ENCODE measurements at regions of chr3 and their contacts with region 1.

Region 1: GRCh38 chr3:73056014-73056844 is 5.2 kb upstream of the EBLN2 start:
- DNase-seq: peak; percentile 41
- H3K4me3 Mint-ChIP-seq: no peak overlapping the region
- H3K27ac Mint-ChIP-seq: no peak overlapping the region
- H3K4me1 Mint-ChIP-seq: peaks cover 25% of the 10 kb centered on the region
- H3K27me3 Mint-ChIP-seq: no peaks in the 10 kb centered on the region
- CTCF ChIP-seq: peak; percentile 49

Region 2: GRCh38 chr3:72938471-72939265 is 117.6 kb before region 1 on chr3:
- CTCF ChIA-PET with region 1: interaction called, 50 read pairs
- POLR2A ChIA-PET with region 1: interaction called, 4 read pairs
- intact Hi-C with region 1: loop called (anchors 1 kb)
- DNase-seq: peak; percentile 76
- H3K4me3 Mint-ChIP-seq: peak overlapping the region; percentile 13
- H3K27ac Mint-ChIP-seq: no peak overlapping the region
- H3K4me1 Mint-ChIP-seq: peaks cover 12% of the 10 kb centered on the region
- H3K27me3 Mint-ChIP-seq: no peaks in the 10 kb centered on the region
- CTCF ChIP-seq: peak; percentile 71

Region 3: GRCh38 chr3:72944696-72945095 is 111.5 kb before region 1 on chr3:
- CTCF ChIA-PET with region 1: interaction called, 50 read pairs
- POLR2A ChIA-PET with region 1: no interaction called
- intact Hi-C with region 1: loop called (anchors 1 kb)
- DNase-seq: no peak
- H3K4me3 Mint-ChIP-seq: no peak overlapping the region
- H3K27ac Mint-ChIP-seq: no peak overlapping the region
- H3K4me1 Mint-ChIP-seq: peaks cover 8% of the 10 kb centered on the region
- H3K27me3 Mint-ChIP-seq: no peaks in the 10 kb centered on the region
- CTCF ChIP-seq: no peak

Region 4: DNA sequence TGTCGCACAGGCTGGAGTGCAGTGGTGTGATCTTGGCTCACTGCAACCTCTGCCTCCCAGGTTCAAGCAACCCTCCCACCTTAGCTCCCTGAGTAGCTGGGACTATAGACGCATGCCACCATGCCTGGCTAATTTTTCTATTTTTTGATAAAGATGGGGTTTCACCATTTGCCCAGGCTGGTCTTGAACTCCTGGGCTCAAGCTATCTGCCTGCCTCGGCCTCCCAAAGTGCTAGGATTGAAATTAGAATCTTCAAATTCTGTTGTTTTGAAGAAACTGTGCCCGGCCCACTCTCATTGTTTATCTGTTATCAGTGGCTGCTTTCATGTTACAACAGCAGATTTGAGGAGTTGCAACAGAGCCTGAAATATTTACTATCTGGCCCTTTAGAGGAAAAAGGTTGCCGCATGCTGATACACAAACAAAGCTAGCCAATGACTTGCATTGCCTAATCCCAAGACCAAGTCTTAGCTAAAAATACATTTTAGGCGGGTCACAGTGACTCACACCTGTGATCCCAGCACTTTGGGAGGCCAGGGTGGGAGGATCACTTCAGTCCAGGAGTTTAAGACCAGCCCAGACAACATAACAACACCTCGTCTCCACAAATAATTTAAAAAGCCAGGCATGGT is 102.8 kb before region 1 on chr3:
- CTCF ChIA-PET with region 1: interaction called, 10 read pairs
- POLR2A ChIA-PET with region 1: no interaction called
- intact Hi-C with region 1: no loop called
- DNase-seq: peak; percentile 78
- H3K4me3 Mint-ChIP-seq: no peak overlapping the region
- H3K27ac Mint-ChIP-seq: no peak overlapping the region
- H3K4me1 Mint-ChIP-seq: no peaks in the 10 kb centered on the region
- H3K27me3 Mint-ChIP-seq: no peaks in the 10 kb centered on the region
- CTCF ChIP-seq: no peak

Region 5: GRCh38 chr3:72996473-72997333 is 59.5 kb before region 1 on chr3 and contains the start of gene PPP4R2:
- CTCF ChIA-PET with region 1: interaction called, 17 read pairs
- POLR2A ChIA-PET with region 1: interaction called, 16 read pairs
- intact Hi-C with region 1: loop called (anchors 1 kb)
- DNase-seq: peak; percentile 87
- H3K4me3 Mint-ChIP-seq: peak within 1 kb of the TSS; percentile 86
- H3K27ac Mint-ChIP-seq: peak within 1 kb of the TSS; percentile 29
- H3K4me1 Mint-ChIP-seq: peaks cover 18% of the 10 kb centered on the region
- H3K27me3 Mint-ChIP-seq: no peaks in the 10 kb centered on the region
- CTCF ChIP-seq: no peak
- total RNA-seq, gene PPP4R2: 86.3 and 105 TPM in 2 replicates

Region 6: GRCh38 chr3:73045391-73045790 is 10.8 kb before region 1 on chr3:
- CTCF ChIA-PET with region 1: interaction called, 9 read pairs
- POLR2A ChIA-PET with region 1: interaction called, 10 read pairs
- intact Hi-C with region 1: no loop called
- DNase-seq: peak; percentile 69
- H3K4me3 Mint-ChIP-seq: no peak overlapping the region
- H3K27ac Mint-ChIP-seq: no peak overlapping the region
- H3K4me1 Mint-ChIP-seq: peaks cover 15% of the 10 kb centered on the region
- H3K27me3 Mint-ChIP-seq: no peaks in the 10 kb centered on the region
- CTCF ChIP-seq: no peak

Region 7: GRCh38 chr3:73086071-73086494 is 29.9 kb after region 1 on chr3:
- CTCF ChIA-PET with region 1: interaction called, 28 read pairs
- POLR2A ChIA-PET with region 1: no interaction called
- intact Hi-C with region 1: no loop called
- DNase-seq: peak; percentile 54
- H3K4me3 Mint-ChIP-seq: no peak overlapping the region
- H3K27ac Mint-ChIP-seq: no peak overlapping the region
- H3K4me1 Mint-ChIP-seq: no peaks in the 10 kb centered on the region
- H3K27me3 Mint-ChIP-seq: no peaks in the 10 kb centered on the region
- CTCF ChIP-seq: peak; percentile 78

Region 8: GRCh38 chr3:73206022-73206421 is 149.8 kb after region 1 on chr3:
- CTCF ChIA-PET with region 1: no interaction called
- POLR2A ChIA-PET with region 1: no interaction called
- intact Hi-C with region 1: no loop called
- DNase-seq: no peak
- H3K4me3 Mint-ChIP-seq: no peak overlapping the region
- H3K27ac Mint-ChIP-seq: no peak overlapping the region
- H3K4me1 Mint-ChIP-seq: no peaks in the 10 kb centered on the region
- H3K27me3 Mint-ChIP-seq: no peaks in the 10 kb centered on the region
- CTCF ChIP-seq: no peak

Region 9: GRCh38 chr3:73296859-73297258 is 240.6 kb after region 1 on chr3:
- CTCF ChIA-PET with region 1: no interaction called
- POLR2A ChIA-PET with region 1: no interaction called
- intact Hi-C with region 1: no loop called
- DNase-seq: no peak
- H3K4me3 Mint-ChIP-seq: no peak overlapping the region
- H3K27ac Mint-ChIP-seq: no peak overlapping the region
- H3K4me1 Mint-ChIP-seq: no peaks in the 10 kb centered on the region
- H3K27me3 Mint-ChIP-seq: peaks cover 37% of the 10 kb centered on the region
- CTCF ChIP-seq: no peak